ENCODE measurements at regions of chr6 and their contacts with region 1.

Region 1: DNA sequence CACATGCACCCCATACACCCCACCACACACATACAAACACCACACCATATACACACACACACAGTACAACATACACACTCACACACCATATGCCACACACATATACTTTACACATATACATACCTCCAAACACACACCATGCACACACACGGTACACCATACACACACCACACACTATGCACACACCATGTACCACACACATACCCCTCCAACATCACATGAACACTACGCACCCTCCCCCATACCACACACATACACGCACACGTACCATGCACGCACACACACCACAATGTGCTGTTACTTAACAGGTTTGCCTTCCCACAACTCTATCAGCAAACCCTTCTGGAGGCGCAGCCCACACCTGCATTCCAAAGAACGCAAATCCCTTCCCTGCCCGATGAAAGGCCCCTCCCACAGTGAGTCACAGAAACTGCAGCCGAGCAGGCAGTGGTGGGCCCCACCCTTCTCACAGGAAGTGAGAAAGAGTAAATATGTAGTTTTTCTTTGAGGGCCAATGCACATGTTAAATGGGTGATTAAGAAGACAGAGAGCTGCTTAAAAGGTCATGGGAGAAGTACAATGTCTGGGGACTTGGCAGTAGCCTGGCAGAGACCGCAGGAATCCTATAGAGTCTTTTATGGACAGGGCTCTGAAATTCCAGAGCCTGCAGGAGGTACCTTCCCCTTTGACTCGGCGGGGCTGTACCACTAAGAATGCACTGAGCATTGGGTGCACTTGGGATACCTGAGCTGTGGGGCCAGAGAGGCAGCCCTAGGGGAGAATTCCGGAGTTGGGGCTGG is 34.1 kb upstream of the EZR start:
- DNase-seq: peak; percentile 87
- ATAC-seq: peak; percentile 85
- H3K4me3 ChIP-seq: peak overlapping the region in 4 of 5 experiments; percentile 20 to 56 (median 48)
- H3K4me3 Mint-ChIP-seq: no peak overlapping the region
- H3K27ac ChIP-seq: peak overlapping the region; percentile 85 to 90
- H3K27ac Mint-ChIP-seq: no peak overlapping the region
- H3K4me1 ChIP-seq: peaks cover 73 to 85% of the 10 kb centered on the region in 2 donors
- H3K4me1 Mint-ChIP-seq: peaks cover 45% of the 10 kb centered on the region
- H3K27me3 ChIP-seq: no peaks in the 10 kb centered on the region
- H3K27me3 Mint-ChIP-seq: no peaks in the 10 kb centered on the region
- CTCF ChIP-seq: no peak

Region 2: GRCh38 chr6:158819213-158819909 is 33.9 kb before region 1 on chr6 and contains the start of gene EZR:
- CTCF ChIA-PET with region 1: interaction called, 9 read pairs
- POLR2A ChIA-PET with region 1: interaction called, 15 read pairs
- intact Hi-C with region 1: loop called (anchors 1 kb)
- DNase-seq: peak; percentile 94
- ATAC-seq: peak; percentile 69
- H3K4me3 ChIP-seq: peak within 1 kb of the TSS; percentile 22 to 100 (median 69)
- H3K4me3 Mint-ChIP-seq: peak within 1 kb of the TSS; percentile 88
- H3K27ac ChIP-seq: peak within 1 kb of the TSS; percentile 96 to 99
- H3K27ac Mint-ChIP-seq: peak within 1 kb of the TSS; percentile 99
- H3K4me1 ChIP-seq: peaks cover 25 to 36% of the 10 kb centered on the region in 2 donors
- H3K4me1 Mint-ChIP-seq: peaks cover 36% of the 10 kb centered on the region
- H3K27me3 ChIP-seq: no peaks in the 10 kb centered on the region
- H3K27me3 Mint-ChIP-seq: no peaks in the 10 kb centered on the region
- CTCF ChIP-seq: no peak
- total RNA-seq, gene EZR: 943 and 945 TPM in 2 replicates

Region 3: DNA sequence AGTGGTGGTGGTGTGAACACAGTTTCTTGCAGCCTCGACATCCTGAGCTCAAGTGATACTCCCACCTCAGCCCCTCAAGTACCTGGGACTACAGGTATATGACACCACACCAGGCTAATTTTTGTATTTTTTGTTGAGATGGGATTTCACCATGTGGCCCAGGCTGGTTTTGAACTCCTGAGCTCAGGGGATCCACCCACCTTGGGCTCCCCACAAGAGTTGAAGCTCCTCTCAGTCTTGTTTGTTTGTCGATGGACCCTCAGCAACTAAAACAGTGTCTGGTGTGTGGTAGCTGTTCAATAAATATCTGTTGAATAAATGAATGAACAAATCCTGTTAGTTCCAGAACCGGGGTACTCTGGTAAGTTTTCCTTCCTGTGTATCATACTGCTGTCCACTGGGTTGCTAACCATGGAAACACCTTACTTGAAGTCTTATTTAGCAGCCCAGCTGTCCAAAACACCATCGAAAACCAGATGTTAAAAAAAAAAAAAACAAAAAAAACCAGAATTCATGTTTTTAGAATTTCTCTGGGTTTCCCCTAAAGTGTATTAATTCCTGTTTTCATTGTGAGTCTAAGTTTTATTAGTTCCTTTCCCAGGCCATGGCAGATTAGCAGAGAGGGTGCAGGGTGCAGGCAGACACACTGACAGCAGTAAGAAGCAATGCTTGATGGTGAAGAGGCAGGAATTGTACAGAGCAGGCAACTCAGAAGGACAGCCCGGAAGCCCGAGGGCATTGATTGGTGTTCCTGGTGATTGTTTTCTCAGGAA is 26.3 kb before region 1 on chr6:
- CTCF ChIA-PET with region 1: interaction called, 4 read pairs
- POLR2A ChIA-PET with region 1: interaction called, 12 read pairs
- intact Hi-C with region 1: loop called (anchors 1 kb)
- DNase-seq: peak; percentile 79
- ATAC-seq: peak; percentile 81
- H3K4me3 ChIP-seq: no peak overlapping the region
- H3K4me3 Mint-ChIP-seq: peak overlapping the region; percentile 42
- H3K27ac ChIP-seq: peak overlapping the region; percentile 84 to 89
- H3K27ac Mint-ChIP-seq: peak overlapping the region; percentile 81
- H3K4me1 ChIP-seq: peaks cover 26 to 27% of the 10 kb centered on the region in 2 donors
- H3K4me1 Mint-ChIP-seq: peaks cover 32% of the 10 kb centered on the region
- H3K27me3 ChIP-seq: no peaks in the 10 kb centered on the region
- H3K27me3 Mint-ChIP-seq: no peaks in the 10 kb centered on the region
- CTCF ChIP-seq: no peak

Region 4: DNA sequence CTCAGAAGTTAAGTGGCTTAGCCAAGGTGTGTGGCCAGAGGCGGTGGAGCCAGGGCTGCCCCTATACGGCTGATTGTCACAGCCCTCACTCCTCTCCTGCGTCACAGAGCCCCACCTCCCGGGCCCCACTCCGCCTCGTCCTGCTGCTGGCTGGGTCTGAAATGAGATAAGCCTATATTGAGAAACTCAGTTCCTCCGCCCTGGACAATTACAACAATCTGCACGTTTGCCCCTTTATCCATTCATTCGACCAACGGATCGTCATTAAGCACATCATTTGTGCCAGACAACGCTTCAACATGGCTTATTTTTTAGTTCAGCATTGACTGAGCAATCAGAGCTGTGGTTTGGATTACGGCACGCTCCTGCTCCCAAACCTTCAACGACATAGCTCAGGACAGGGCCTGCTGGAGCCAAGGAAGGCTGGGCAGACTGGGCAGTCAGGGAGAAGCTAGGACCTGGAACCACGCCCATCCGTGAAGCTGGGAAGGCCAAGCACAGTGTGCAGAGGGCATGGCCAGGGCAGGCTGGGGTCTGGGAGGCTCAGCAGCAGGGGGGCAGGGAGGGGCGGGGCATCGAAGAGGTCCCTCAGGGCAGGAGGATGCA is 17.6 kb before region 1 on chr6:
- CTCF ChIA-PET with region 1: interaction called, 5 read pairs
- POLR2A ChIA-PET with region 1: interaction called, 4 read pairs
- intact Hi-C with region 1: loop called (anchors 2 kb)
- DNase-seq: no peak
- ATAC-seq: peak; percentile 57
- H3K4me3 ChIP-seq: no peak overlapping the region
- H3K4me3 Mint-ChIP-seq: no peak overlapping the region
- H3K27ac ChIP-seq: no peak overlapping the region
- H3K27ac Mint-ChIP-seq: peak overlapping the region; percentile 33
- H3K4me1 ChIP-seq: peaks cover 17 to 24% of the 10 kb centered on the region in 2 donors
- H3K4me1 Mint-ChIP-seq: peaks cover 26% of the 10 kb centered on the region
- H3K27me3 ChIP-seq: no peaks in the 10 kb centered on the region
- H3K27me3 Mint-ChIP-seq: no peaks in the 10 kb centered on the region
- CTCF ChIP-seq: no peak

Measured in B cell (primary cell).